Right cardiac atrium (tissue), 5 donors: ENCODE measurements at regions of chr20 and their contacts with region 1.

Region 1: DNA sequence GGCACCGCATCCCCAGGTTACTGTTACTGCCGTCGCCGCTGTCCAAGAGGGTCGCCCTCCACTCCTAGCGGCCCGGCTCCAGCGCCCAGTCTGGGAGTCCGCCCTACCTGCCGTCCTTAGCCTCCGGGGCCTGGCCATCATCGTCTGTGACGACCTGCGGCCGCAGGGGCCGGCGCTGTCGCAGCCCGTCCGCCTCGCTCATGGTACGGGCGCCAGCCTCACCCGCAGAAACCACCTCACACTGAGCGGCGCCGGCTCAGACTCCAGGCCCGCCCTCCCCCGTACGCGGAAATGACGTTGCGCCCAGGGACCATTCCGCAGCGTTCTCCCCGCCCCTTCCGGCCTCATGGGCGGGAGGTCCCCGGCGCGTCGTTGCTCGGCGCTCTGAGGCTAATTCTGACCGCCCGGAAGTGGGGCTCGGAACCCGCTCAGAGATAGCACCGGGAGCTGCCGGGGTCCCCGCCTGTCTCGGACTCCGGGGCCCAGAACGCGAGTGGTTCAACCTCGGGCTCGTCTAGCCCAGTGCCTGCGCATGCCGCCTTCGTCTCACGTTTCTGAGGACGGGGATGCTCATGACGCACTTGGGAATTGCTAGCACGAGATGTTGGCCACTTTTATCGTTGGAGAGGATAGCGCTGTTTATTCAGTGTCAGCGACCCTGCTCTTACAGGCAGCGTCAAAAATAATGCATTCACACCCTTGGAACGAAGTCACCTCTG is at the start of gene APMAP:
- DNase-seq: peak; percentile 97 to 99 (median 98)
- ATAC-seq: peak; percentile 97 to 98
- H3K4me3 ChIP-seq: peak within 1 kb of the TSS; percentile 76
- H3K27ac ChIP-seq: peak within 1 kb of the TSS; percentile 98
- H3K4me1 ChIP-seq: no peaks in the 10 kb centered on the region
- H3K27me3 ChIP-seq: no peaks in the 10 kb centered on the region
- total RNA-seq, gene APMAP: 32.8 to 35.1 (median 34.8) TPM

Region 2: DNA sequence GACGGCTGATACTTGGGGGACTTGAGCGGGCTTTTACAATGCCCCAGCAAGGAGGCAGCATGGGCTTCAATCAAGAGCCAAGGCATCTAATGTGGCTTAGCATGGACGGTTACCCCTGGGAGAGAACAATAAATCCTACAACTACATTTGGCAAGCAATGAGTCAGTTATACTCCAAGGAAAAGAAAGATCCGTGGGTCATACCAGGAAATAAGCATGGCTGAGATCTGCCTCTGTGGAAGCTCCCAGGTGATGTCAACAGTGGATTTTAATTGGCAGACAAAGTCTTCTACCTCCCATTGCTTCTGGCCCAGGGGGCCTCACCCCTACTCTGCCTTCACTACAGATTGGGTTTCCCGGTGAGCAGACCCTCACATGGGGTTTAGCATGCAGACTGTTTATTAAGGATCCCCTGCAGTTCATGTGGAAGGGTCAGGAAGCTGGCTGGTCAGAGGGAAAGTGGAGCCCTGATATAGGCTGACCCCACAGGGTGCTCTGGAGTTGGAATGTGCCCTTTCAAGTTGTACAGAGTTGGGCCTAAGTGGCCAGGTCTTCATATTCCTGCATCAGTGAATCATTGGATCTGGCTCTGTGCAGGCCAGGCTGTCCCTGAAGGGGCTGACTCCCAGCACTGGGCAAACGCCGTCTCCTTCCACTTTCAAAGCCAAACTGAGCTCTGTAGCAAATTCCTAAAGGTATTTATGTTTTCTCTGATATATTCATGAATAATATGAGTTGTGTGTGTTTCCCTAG is 912.8 kb before region 1 on chr20:
- intact Hi-C with region 1: no loop called
- DNase-seq: no peak
- ATAC-seq: no peak
- H3K4me3 ChIP-seq: no peak overlapping the region
- H3K27ac ChIP-seq: no peak overlapping the region
- H3K4me1 ChIP-seq: no peaks in the 10 kb centered on the region
- H3K27me3 ChIP-seq: no peaks in the 10 kb centered on the region

Region 3: GRCh38 chr20:25065625-25066338 is 73.1 kb after region 1 on chr20:
- intact Hi-C with region 1: loop called (anchors 1 to 2 kb)
- DNase-seq: peak in 1 of 3 donors; percentile 85
- ATAC-seq: peak; percentile 74 to 76
- H3K4me3 ChIP-seq: no peak overlapping the region
- H3K27ac ChIP-seq: no peak overlapping the region
- H3K4me1 ChIP-seq: peaks cover 6% of the 10 kb centered on the region
- H3K27me3 ChIP-seq: no peaks in the 10 kb centered on the region

Region 4: GRCh38 chr20:25195014-25195961 is 202.6 kb after region 1 on chr20 and contains the start of gene ENTPD6:
- intact Hi-C with region 1: loop called in 1 of 4 experiments (anchors 10 kb)
- DNase-seq: peak; percentile 94 to 98 (median 97)
- ATAC-seq: peak; percentile 91 to 93
- H3K4me3 ChIP-seq: peak within 1 kb of the TSS; percentile 78
- H3K27ac ChIP-seq: peak within 1 kb of the TSS; percentile 66
- H3K4me1 ChIP-seq: peaks cover 17% of the 10 kb centered on the region
- H3K27me3 ChIP-seq: no peaks in the 10 kb centered on the region
- total RNA-seq, gene ENTPD6: 102 to 132 (median 127) TPM

Region 5: GRCh38 chr20:25407311-25408169 is 414.9 kb after region 1 on chr20 and contains the start of gene GINS1:
- intact Hi-C with region 1: loop called in 2 of 4 experiments (anchors 5 to 10 kb)
- DNase-seq: peak; percentile 85 to 92 (median 92)
- ATAC-seq: peak; percentile 97
- H3K4me3 ChIP-seq: peak within 1 kb of the TSS; percentile 91
- H3K27ac ChIP-seq: no peak within 1 kb of the TSS
- H3K4me1 ChIP-seq: no peaks in the 10 kb centered on the region
- H3K27me3 ChIP-seq: no peaks in the 10 kb centered on the region
- total RNA-seq, gene GINS1: 0.45 to 0.85 (median 0.63) TPM